ENCODE measurements at regions of chr14 and their contacts with region 1.

Region 1: DNA sequence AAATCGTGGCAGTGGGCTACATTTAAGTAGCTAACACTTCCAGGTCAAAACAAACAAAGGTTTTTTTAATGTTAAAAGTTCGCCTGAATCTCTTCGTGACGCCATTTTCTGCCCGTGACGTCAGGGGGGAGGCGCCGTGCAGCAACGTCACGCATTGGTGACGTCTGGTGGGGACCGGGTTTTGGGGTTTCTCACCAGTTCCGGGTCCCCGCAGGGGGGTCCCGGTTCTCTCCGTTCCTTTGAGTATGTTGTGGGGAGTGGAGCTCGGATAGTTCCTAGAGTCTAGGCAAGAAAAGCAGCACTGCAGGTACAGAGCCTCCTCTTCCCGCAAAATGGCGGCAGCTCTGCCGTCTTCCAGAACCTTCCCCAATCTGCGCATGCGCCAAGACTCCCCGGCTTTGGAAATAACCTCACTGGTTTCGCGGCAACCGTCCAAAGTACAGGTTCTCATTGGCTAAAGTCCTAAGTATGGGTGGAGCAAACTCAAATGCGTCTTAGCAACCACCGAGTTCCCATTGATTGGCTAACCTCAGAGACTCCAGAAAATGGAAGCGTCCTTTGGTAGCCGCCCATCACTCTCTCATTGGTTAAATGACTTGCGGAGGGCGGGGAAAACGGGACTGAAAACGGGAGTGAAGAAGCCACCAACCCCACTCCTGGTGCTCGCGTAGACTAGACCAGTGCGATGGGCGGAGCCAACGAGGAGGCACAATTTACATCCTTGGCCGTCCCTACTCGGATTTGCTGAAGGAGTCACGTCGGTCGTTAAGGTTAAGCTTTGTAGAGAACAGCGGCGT is at the start of gene RBM23:
- DNase-seq: peak; percentile 99
- H3K4me3 Mint-ChIP-seq: peak within 1 kb of the TSS; percentile 95
- H3K27ac Mint-ChIP-seq: peak within 1 kb of the TSS; percentile 100
- H3K4me1 Mint-ChIP-seq: peaks cover 54% of the 10 kb centered on the region
- H3K27me3 Mint-ChIP-seq: peaks cover 4% of the 10 kb centered on the region
- total RNA-seq, gene RBM23: 86.4 and 90.5 TPM in 2 replicates

Region 2: DNA sequence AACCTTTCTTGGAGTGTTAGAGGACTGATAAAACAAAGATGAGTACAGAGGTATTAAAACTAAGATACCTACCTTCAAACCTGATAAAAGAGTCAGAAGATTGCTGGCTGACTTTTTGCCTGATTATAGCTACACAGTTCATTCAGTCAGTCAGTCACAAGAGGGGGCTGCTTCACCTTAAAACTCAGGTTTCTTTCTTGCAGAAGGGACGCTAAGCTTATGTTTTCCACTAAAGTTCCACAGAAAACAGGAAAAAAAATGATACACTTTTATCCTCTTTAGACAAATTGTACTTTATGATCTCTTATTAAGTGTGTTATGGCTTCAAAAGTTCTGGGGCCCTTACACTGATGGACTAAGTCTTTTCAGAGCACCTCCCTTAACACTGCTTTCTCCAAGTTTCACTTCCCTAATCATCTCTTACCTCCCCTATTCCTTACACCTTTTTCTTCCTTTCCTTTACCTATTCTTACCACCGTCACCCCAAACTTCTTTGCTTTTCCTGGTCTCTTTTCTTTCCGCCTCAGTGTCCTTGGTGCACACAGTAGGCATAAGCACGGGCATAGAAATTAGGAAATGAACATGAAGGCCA is 796.7 kb before region 1 on chr14:
- intact Hi-C with region 1: no loop called
- DNase-seq: no peak
- H3K4me3 Mint-ChIP-seq: peak overlapping the region; percentile 90
- H3K27ac Mint-ChIP-seq: peak overlapping the region; percentile 79
- H3K4me1 Mint-ChIP-seq: peaks cover 21% of the 10 kb centered on the region
- H3K27me3 Mint-ChIP-seq: no peaks in the 10 kb centered on the region

Region 3: DNA sequence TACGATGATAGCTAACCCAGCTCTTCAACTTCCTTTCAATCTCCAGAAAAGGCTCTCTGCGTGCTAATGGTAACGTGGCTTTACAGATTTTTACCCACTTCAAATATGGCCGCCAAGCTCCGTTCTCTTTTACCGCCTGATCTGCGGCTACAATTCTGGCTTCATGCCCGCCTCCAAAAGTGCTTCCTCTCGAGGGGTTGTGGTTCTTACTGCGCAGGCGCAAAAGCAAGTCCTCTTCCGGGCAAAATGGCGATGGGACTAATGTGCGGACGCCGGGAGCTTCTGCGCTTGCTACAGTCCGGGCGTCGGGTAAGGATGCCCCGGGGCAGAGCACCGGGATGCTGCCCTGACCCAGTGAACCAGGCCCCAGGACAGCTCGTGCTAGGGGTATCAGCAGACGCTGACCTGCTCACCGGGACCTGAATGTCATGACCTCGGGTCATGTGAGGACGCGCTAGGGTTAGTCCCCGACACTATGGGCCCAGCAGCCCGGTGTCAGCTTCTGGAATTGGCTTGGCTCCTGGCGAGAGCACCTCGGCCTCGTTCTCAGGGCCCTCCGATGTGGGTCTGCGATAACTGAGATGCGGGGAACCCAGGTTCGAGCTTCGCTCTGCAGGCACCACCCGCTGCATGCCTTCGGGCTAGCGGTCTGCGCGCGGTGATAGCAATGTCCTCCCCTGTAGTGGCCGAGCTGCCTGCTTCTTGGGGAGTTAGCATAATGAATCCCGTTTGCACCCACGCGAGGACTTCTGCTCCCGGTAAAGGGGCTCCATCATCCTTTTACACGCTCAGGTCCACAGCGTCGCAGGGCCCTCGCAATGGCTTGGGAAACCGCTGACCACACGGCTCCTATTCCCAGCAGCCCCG is 152.3 kb before region 1 on chr14 and contains the start of gene OXA1L:
- intact Hi-C with region 1: loop called (anchors 5 kb)
- DNase-seq: peak; percentile 94
- H3K4me3 Mint-ChIP-seq: peak within 1 kb of the TSS; percentile 94
- H3K27ac Mint-ChIP-seq: peak within 1 kb of the TSS; percentile 96
- H3K4me1 Mint-ChIP-seq: peaks cover 22% of the 10 kb centered on the region
- H3K27me3 Mint-ChIP-seq: no peaks in the 10 kb centered on the region
- total RNA-seq, gene OXA1L: 125 and 127 TPM in 2 replicates

Region 4: DNA sequence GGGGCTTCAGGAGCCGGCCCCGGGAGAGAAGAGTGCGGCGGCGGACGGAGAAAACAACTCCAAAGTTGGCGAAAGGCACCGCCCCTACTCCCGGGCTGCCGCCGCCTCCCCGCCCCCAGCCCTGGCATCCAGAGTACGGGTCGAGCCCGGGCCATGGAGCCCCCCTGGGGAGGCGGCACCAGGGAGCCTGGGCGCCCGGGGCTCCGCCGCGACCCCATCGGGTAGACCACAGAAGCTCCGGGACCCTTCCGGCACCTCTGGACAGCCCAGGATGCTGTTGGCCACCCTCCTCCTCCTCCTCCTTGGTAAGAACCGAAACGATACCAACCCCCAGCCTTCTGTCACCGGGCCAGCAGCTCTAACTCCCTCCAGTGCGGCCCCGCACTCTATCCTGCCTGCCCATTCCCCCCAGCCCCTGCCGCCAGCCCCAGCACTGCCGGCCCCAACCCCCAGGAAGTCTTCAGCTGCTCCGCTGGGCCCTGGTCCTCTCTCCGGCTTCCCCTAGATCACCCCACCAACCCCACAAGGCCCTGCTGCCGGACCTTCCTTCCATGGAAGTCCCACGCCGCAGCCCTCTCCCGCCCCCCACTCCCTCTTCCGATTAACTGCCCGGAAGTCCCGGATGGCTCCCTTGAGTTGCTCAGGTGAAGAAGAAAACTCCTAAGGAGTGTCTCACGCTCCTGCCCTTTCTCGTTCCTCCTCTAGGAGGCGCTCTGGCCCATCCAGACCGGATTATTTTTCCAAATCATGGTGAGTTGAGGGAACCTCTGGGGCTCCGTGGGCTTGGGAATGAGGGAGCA is 46.8 kb before region 1 on chr14:
- intact Hi-C with region 1: loop called (anchors 1 kb)
- DNase-seq: peak; percentile 63
- H3K4me3 Mint-ChIP-seq: peak overlapping the region; percentile 91
- H3K27ac Mint-ChIP-seq: peak overlapping the region; percentile 80
- H3K4me1 Mint-ChIP-seq: peaks cover 22% of the 10 kb centered on the region
- H3K27me3 Mint-ChIP-seq: no peaks in the 10 kb centered on the region

Region 5: GRCh38 chr14:22929104-22929847 is 10.3 kb after region 1 on chr14 and contains the start of gene PRMT5:
- intact Hi-C with region 1: loop called (anchors 1 kb)
- DNase-seq: peak; percentile 95
- H3K4me3 Mint-ChIP-seq: no peak within 1 kb of the TSS
- H3K27ac Mint-ChIP-seq: no peak within 1 kb of the TSS
- H3K4me1 Mint-ChIP-seq: peaks cover 32% of the 10 kb centered on the region
- H3K27me3 Mint-ChIP-seq: no peaks in the 10 kb centered on the region
- total RNA-seq, gene PRMT5: 174 and 180 TPM in 2 replicates

Region 6: DNA sequence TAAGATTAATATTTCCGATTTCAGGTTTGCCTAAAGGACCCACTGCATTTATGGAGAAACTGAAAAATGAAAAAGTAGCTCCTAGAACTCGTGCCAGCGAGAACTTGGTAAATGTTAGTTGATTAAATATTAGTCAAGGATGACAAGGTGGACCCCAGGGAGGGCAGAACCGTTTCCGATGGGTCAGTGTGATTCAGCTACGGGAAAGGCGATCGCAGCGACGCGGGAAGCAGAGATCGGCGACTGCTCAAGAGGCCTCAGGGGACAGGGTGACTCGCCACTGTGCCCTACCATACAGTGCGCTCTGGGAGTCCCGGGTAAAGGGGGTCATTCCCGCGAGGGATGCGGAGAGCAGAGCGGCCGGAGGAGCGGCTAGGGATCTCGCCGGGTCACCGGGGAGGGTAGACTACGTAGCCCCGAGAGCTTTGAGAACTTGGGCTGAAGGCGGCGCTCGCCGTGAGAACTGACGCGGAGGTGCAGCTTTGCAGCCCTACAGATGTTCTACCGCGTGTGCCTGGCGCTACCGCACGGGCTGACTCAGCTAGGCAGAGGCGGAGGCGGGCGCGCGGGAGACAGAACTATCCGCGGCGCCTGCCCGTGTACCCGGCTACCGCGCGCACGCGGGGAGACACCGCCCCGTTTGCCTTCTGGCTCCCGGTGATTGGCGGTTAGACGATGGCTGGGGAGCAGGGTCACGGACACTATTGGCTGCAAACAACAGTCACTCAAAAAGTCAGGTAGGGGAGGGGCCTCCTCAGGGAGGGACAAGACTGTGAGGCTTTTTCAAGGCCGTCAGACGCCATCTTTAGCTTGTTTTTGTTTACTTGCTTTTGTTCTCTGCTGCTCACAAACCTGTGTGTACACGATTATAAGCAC is 87.8 kb after region 1 on chr14:
- intact Hi-C with region 1: loop called (anchors 1 kb)
- DNase-seq: peak; percentile 98
- H3K4me3 Mint-ChIP-seq: peak overlapping the region; percentile 97
- H3K27ac Mint-ChIP-seq: peak overlapping the region; percentile 97
- H3K4me1 Mint-ChIP-seq: peaks cover 52% of the 10 kb centered on the region
- H3K27me3 Mint-ChIP-seq: no peaks in the 10 kb centered on the region

Region 7: DNA sequence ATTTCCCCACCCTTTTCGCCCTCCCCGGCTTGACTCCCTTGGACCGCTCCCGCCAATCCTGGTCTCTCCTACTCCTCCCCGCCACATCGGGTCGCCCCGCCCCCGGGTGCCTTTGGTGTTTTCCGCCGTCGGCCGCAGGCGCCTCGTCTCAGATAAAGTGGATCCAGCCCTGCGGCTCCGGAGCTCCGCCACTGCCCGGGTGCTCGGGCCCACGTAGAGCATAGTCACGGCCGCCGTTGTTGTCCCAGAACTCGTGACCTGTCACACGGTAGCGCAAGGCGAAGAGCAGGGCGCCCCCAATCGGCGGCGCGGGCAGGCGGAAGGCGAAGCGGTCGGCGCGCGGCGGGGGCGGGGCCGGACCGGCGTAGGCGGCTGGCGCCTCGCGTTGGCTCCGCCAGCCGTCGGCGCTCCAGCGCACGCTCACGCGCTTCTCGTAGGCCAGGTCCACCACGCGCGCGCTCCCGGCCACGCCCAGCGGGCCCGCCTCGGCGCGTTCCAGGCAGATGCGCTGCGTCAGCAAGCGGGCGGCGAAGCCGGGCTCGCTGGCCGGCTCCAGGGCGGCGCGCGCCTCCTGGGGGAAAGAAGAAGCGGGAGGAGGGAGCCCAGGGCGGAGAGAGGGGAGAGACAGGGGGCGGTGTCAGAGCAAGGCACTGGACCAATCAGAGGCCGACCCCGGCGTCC is 382.4 kb after region 1 on chr14:
- intact Hi-C with region 1: loop called (anchors 1 kb)
- DNase-seq: peak; percentile 99
- H3K4me3 Mint-ChIP-seq: peak overlapping the region; percentile 91
- H3K27ac Mint-ChIP-seq: peak overlapping the region; percentile 97
- H3K4me1 Mint-ChIP-seq: peaks cover 29% of the 10 kb centered on the region
- H3K27me3 Mint-ChIP-seq: no peaks in the 10 kb centered on the region

Measured in activated T-helper 1 cell treated with anti-CD3 and anti-CD28 coated beads, Interleukin-12 subunit alpha, Interleukin-12 subunit beta, Interleukin-2, Interleukin-4 antibody, amounts not matched to agents 30 ng/mL and 10 ng/mL and 1 ng/mL, durations not matched to agents 14 hours and 24 hours and 36 hours (primary cell).